ENCODE measurements at regions of chr2 and their contacts with region 1.

Region 1: GRCh38 chr2:175690113-175690837 is 311.8 kb downstream of the LNPK start:
- DNase-seq: peak in 6 of 35 experiments; percentile 2 to 68 (median 8)
- ATAC-seq: peak in 1 of 4 experiments; percentile 51
- H3K4me3 ChIP-seq: no peak overlapping the region
- H3K4me3 Mint-ChIP-seq: no peak overlapping the region
- H3K27ac ChIP-seq: no peak overlapping the region
- H3K27ac Mint-ChIP-seq: no peak overlapping the region
- H3K4me1 ChIP-seq: no peaks in the 10 kb centered on the region
- H3K4me1 Mint-ChIP-seq: no peaks in the 10 kb centered on the region
- H3K27me3 ChIP-seq: peaks cover 5 to 14% of the 10 kb centered on the region in 2 experiments
- H3K27me3 Mint-ChIP-seq: peaks cover 11 to 35% of the 10 kb centered on the region in 2 donors

Region 2: GRCh38 chr2:176096986-176097819 is 406.9 kb after region 1 on chr2:
- CTCF ChIA-PET with region 1: interaction called, 34 to 46 read pairs
- POLR2A ChIA-PET with region 1: no interaction called
- DNase-seq: peak in 27 of 35 experiments; percentile 21 to 75 (median 38)
- ATAC-seq: peak; percentile 68 to 81 (median 76)
- H3K4me3 ChIP-seq: peak overlapping the region; percentile 36 to 70
- H3K4me3 Mint-ChIP-seq: peak overlapping the region; percentile 66 to 75 (median 71)
- H3K27ac ChIP-seq: no peak overlapping the region
- H3K27ac Mint-ChIP-seq: peak overlapping the region in 1 of 2 donors; percentile 69
- H3K4me1 ChIP-seq: peaks cover 8 to 27% of the 10 kb centered on the region in 2 experiments
- H3K4me1 Mint-ChIP-seq: peaks cover 26 to 29% (median 27%) of the 10 kb centered on the region in 3 donors
- H3K27me3 ChIP-seq: peaks cover 30 to 81% of the 10 kb centered on the region in 2 experiments
- H3K27me3 Mint-ChIP-seq: peaks cover 80 to 88% of the 10 kb centered on the region in 2 donors